K562 (cell line): ENCODE measurements at regions of chr7 and their contacts with region 1.

Region 1: DNA sequence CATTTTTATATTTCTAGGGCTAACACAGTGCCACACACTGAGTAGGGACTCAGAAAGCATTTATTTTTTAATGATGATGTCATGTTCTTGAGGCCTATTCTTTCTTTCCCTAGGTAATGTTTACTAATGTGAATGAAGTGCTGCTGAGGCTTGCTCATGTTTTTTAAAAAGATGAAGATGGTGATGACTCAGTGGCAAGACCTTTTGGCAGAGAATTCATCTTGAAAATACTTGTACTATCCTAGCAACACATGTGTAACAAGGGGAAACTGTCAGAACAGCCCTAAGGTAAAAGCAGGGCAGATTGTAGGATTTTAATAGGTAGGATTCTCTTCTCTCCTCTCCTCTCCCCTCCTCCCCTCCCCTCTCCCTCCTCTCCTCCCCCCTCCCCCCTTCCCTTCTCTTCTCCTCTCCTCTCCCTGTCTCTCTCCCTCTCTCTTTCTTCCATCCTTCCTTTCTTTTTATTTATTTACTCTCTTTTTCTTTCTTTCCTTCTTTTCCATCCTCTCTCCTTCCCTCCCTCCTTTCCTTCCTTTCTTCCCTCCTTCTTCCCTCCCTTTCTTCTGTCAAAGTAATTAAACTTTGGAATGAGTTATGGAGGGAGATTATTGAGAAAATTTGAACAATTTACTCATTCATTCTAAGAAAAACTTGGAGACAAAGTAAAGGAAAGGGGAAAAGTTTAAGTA is 75.3 kb downstream of the ZNF92 start:
- DNase-seq: no peak
- ATAC-seq: no peak
- H3K4me3 ChIP-seq: no peak overlapping the region
- H3K27ac ChIP-seq: no peak overlapping the region
- H3K4me1 ChIP-seq: no peaks in the 10 kb centered on the region
- H3K27me3 ChIP-seq: peaks cover 0 to 2% of the 10 kb centered on the region in 2 experiments; a peak in 1 of 5 replicates
- CTCF ChIP-seq: no peak
- EP300 ChIP-seq: no peak
- POLR2A ChIP-seq: no peak
- RAD21 ChIP-seq: no peak

Region 2: GRCh38 chr7:65307651-65308299 is 141.2 kb before region 1 on chr7:
- CTCF ChIA-PET with region 1: no interaction called
- POLR2A ChIA-PET with region 1: no interaction called
- in situ Hi-C with region 1: no loop called
- intact Hi-C with region 1: loop called (anchors 5 kb)
- DNase-seq: peak; percentile 70 to 82 (median 74)
- ATAC-seq: peak; percentile 96
- H3K4me3 ChIP-seq: no peak overlapping the region
- H3K27ac ChIP-seq: no peak overlapping the region
- H3K4me1 ChIP-seq: peaks cover 0 to 2% of the 10 kb centered on the region in 2 experiments; a peak in 1 of 5 replicates
- H3K27me3 ChIP-seq: no peaks in the 10 kb centered on the region
- CTCF ChIP-seq: peak; percentile 85 to 95 (median 91)
- EP300 ChIP-seq: no peak
- POLR2A ChIP-seq: no peak
- RAD21 ChIP-seq: peak; percentile 89 to 92